ENCODE measurements at regions of chr7 and their contacts with region 1.

Region 1: GRCh38 chr7:42107484-42108245 is 129.3 kb downstream of the GLI3 start:
- DNase-seq: peak; percentile 88
- ATAC-seq: peak; percentile 49
- H3K4me3 ChIP-seq: peak overlapping the region; percentile 45
- H3K27ac ChIP-seq: peak overlapping the region; percentile 94
- H3K4me1 ChIP-seq: peaks cover 57% of the 10 kb centered on the region
- H3K27me3 ChIP-seq: no peaks in the 10 kb centered on the region
- CTCF ChIP-seq: no peak

Region 2: GRCh38 chr7:41996381-41997035 is 111.2 kb before region 1 on chr7:
- CTCF ChIA-PET with region 1: no interaction called
- POLR2A ChIA-PET with region 1: no interaction called
- intact Hi-C with region 1: loop called (anchors 10 kb)
- DNase-seq: peak; percentile 95
- ATAC-seq: peak; percentile 72
- H3K4me3 ChIP-seq: peak overlapping the region; percentile 60
- H3K27ac ChIP-seq: peak overlapping the region; percentile 85
- H3K4me1 ChIP-seq: peaks cover 75% of the 10 kb centered on the region
- H3K27me3 ChIP-seq: no peaks in the 10 kb centered on the region
- CTCF ChIP-seq: no peak

Measured in PC-3 (cell line).